ENCODE measurements at regions of chr21 and their contacts with region 1.

Region 1: DNA sequence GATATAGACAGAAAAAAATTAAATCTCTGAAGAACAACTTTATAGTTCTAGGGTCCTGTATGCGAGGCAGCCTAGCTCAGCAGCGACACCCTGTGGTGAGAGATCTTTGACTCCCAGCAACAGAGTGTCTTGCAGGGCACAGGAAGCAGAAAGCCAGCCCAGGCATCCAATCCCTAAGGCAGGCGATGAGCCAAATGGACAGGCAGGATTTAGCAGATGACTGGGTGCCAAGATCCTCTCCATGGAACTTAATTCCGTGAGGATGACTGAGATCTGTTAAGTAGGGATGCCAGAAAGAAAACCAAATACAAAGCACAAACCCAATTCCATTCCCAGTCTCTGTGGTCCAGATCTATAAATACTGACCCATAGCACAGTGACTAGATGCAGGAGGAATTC is 38.8 kb downstream of the HLCS start:
- DNase-seq: peak; percentile 66 to 97 (median 84)
- ATAC-seq: peak; percentile 93
- H3K4me3 ChIP-seq: no peak overlapping the region
- H3K4me1 ChIP-seq: peaks cover 8% of the 10 kb centered on the region
- CTCF ChIP-seq: peak; percentile 66

Region 2: DNA sequence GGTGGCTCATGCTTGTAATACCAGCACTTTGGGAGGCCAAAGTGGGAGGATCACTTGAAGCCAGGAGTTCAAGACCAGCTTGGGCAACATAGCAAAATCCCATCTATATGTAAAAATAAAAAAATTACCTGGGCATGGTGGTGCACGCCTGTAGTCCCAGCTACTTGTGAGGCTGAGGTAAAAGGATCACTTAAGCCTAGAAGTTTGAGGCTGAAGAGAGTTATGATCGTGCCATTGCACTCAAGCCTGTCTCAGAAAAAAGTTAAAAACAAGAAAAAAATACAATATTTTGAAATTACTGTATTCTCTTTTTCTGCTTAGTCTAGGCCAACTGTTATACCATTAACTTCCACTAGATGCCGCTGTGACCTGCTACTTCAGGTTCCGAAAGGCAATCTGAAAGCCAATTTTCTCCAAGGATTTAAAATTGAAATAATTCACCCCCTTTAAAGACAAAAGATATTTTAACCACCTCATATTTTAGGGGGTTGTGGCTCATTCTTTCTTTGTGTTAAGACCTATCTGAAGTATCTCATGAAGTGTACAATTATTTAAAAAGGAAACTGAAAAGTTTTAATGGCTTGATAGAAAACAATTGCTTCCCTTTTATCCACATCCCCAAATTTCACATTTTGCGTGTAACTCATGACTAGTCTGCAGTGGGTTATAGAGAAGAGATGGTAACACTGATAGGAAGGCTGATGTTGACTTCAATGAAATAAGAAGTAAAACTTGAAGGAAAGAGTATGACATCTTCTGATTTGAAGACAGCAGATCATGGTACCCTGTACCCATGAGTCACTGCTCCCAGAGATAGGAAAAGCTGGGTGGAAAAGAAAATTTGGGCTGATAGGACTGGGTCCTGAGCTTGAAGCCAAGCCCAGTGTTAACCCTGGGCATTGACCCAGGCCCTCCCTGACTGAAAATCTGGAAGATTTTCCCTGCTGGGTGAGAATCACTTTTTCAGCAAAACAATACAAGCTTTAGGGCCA is 423.4 kb before region 1 on chr21:
- intact Hi-C with region 1: loop called in 1 of 2 experiments (anchors 2 kb)
- DNase-seq: peak in 1 of 3 donors; percentile 75
- ATAC-seq: peak; percentile 38
- H3K4me3 ChIP-seq: no peak overlapping the region
- H3K4me1 ChIP-seq: no peaks in the 10 kb centered on the region
- CTCF ChIP-seq: peak; percentile 93

Region 3: DNA sequence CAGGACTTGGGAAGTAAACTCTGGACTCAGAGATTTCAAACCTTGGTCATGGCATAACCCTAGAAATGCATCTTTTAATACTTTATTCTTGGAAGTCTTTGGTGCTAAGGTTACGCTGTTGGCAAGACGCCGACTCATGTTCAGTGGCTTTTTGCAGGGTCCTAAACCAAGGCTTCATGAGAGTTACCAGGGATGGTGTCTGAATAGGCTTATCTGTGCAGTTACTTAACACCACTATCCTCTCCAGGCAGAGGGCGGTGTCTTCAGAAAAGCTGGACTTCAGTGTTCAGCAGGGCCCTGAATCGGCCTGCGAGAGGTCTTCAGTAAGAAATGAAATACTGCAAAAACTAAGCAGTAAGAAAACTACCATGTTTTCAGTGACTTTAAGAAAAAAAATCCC is 170.5 kb before region 1 on chr21:
- intact Hi-C with region 1: no loop called
- DNase-seq: no peak
- ATAC-seq: no peak
- H3K4me3 ChIP-seq: no peak overlapping the region
- H3K4me1 ChIP-seq: no peaks in the 10 kb centered on the region
- CTCF ChIP-seq: no peak